Sigmoid colon (tissue), 7 donors: ENCODE measurements at regions of chr11 and their contacts with region 1.

Region 1: GRCh38 chr11:117226388-117227385 is 5.2 kb downstream of the PCSK7 start:
- DNase-seq: peak; percentile 81
- H3K4me3 ChIP-seq: no peak overlapping the region
- H3K27ac ChIP-seq: peak overlapping the region; percentile 33 to 95 (median 91)
- H3K4me1 ChIP-seq: peaks cover 0 to 72% (median 63%) of the 10 kb centered on the region in 4 donors
- H3K27me3 ChIP-seq: no peaks in the 10 kb centered on the region
- CTCF ChIP-seq: peak in 3 of 4 experiments; percentile 74 to 95 (median 82)
- EP300 ChIP-seq: no peak
- POLR2A ChIP-seq: no peak

Region 2: DNA sequence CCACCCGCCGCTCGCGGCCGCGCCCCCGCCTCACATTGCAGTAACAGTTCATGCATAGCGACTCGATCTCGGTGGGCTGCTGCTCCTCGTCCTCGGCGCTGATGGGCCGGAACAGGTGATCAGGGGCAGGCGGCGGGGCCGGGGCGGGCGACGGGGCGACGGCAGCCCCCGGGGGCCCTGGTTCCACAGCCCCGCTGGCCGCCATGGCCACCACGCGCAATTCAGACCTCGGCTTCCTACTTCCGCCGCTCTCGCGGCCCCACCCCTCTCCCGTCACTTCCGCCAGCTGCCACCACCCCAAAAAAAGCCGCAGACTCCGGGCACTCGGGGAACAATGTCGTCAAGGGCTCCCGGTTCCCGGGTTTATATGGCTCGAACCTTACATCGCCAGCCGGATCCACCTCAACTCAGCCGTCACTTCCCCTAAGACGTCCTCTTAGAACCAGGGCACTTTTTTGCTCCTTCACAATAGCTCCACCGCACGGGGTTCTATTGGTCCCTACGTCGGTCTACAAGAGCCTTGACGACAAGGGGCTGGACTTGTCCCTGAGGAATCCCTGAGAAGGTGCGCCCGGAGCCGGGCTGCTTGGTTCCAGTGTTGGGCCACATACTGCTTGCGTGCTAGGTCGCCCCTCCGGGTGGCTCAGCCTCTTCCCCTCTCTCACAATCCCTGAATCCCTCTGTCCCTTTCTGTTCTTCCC is 438.8 kb before region 1 on chr11 and contains the start of gene ZPR1:
- intact Hi-C with region 1: loop called (anchors 5 kb)
- DNase-seq: peak; percentile 92
- H3K4me3 ChIP-seq: peak within 1 kb of the TSS; percentile 86 to 97 (median 93)
- H3K27ac ChIP-seq: peak within 1 kb of the TSS; percentile 84 to 90 (median 88)
- H3K4me1 ChIP-seq: peaks cover 0 to 29% (median 20%) of the 10 kb centered on the region in 4 donors
- H3K27me3 ChIP-seq: no peaks in the 10 kb centered on the region
- CTCF ChIP-seq: peak in 1 of 4 experiments; percentile 15
- EP300 ChIP-seq: no peak
- POLR2A ChIP-seq: peak; percentile 66 to 68
- total RNA-seq, gene ZPR1: 14.7 to 28.6 (median 21.0) TPM

Region 3: DNA sequence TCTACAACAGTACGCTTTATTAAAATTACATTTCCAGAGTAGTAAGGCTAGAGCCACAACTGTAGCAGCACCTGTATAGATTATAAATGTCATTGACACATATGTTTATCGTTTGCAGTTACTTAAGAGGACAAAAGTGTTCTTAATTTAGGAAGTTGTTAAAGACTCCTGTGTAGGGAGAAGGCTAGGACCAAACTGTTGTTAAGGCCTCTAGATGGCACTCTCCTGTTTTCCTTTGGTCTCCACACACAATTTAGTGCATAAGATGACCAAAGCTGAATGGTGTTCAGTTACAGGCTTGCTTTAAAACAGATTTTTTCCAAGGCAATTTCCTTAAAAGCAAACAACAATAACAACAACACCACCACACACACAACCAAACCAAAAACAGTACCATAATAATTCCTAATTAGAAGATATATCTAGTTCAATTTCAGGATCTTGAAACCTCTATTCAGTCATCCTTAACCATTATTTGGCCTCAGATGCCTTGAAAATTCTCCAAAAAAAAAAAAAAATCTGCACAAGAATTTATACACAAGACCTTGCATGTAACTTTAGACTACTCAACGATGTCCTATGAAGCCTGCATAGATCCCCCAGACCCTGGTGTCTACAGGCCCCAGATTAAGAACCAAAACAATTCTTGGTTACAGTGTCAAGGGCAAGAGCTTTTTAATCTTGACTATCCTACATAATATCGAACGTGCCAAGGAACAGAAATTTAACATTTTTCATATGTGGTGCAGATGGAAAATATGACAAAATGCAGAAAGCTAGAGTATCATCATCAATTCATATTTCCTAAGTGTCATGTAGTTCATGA is 346.7 kb before region 1 on chr11:
- intact Hi-C with region 1: loop called (anchors 5 kb)
- DNase-seq: no peak
- H3K4me3 ChIP-seq: no peak overlapping the region
- H3K27ac ChIP-seq: peak overlapping the region in 1 of 4 donors; percentile 8
- H3K4me1 ChIP-seq: peaks cover 0 to 9% (median 4%) of the 10 kb centered on the region in 4 donors
- H3K27me3 ChIP-seq: no peaks in the 10 kb centered on the region
- CTCF ChIP-seq: peak; percentile 52 to 67 (median 60)
- EP300 ChIP-seq: no peak
- POLR2A ChIP-seq: no peak

Region 4: DNA sequence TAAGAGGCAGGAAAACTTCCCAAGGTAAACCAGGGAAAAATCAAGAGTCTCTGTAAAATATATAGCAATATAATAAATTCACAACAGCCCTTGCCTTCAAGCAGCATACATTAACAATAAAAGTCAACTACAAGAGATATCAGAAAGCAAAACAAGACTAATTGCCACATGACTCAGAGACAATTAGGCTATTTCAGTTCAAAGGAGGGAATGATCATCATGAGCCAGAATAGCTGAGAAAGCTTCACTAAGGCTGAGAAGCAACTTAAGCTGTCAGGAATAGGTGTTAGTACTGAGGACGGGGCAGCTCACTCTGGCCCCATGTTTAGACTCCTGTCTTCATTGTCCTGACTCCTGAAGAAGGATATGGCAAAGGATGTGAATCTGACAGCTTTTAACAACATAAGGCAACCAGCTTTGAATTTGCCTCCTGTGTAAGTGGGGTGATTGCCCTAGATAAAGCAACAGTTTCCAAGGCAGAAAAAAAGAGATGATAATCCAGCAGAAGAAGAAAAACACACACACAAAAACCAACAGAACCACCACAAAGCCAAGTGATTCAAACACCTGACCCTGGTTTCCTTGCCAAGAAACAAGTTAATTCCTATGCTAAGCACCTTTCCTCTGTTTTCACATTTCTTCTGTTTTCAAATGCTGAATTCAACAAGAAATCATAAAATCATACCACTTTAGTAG is 189.3 kb before region 1 on chr11:
- intact Hi-C with region 1: no loop called
- DNase-seq: no peak
- H3K4me3 ChIP-seq: no peak overlapping the region
- H3K27ac ChIP-seq: peak overlapping the region in 1 of 4 donors; percentile 4
- H3K4me1 ChIP-seq: peaks cover 0 to 39% (median 34%) of the 10 kb centered on the region in 4 donors
- H3K27me3 ChIP-seq: no peaks in the 10 kb centered on the region
- CTCF ChIP-seq: no peak
- EP300 ChIP-seq: no peak
- POLR2A ChIP-seq: no peak

Region 5: DNA sequence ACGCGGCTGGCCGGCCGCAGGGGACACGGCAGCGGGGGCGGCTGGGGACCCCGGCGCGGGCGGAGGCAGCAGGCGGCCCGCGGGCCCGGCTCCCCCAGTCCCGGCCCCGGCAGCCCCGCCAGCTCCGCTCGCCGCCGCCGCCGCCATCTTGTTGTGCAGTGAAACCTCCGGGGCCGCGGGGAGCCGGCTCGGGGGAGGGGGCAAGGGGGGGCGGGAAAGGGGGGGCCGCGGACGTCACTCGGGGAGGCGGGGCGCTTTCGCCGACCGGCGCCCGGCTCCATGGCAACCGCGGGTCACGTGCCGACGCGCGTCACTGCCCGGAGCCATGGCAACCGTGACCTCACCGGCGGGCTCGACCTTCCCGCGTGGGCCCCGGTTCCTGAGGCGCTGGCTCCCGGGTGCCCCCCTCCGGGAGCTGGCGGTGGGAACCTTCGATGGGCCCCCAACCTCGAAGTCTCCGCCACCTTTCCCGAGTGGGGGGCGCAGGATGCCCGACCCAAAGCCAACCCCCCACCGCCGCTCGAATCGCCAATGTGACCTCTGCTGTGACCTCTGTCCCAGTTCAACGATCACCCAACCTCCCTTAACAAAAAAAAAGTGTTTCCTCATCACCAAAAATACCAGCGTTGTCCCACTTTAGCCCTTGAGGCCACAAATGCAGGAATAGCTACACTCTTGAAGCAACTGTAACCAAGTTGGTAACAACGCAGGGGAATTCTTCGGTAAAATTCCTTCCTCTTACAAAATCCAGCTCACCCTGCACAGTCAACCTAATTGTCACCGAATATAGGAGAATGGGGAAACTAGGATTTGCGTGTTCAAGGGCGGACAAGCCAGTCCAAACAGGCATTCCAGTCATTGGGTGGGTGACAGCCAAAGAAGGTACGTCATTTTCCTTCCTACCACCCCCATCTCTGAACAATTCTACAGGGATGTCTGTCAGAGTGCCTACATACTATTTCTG is 128.1 kb before region 1 on chr11 and contains the start of gene SIK3:
- intact Hi-C with region 1: loop called (anchors 2 kb)
- DNase-seq: peak; percentile 97
- H3K4me3 ChIP-seq: peak within 1 kb of the TSS; percentile 77 to 98 (median 91)
- H3K27ac ChIP-seq: peak within 1 kb of the TSS; percentile 97 to 100 (median 98)
- H3K4me1 ChIP-seq: peaks cover 0 to 49% (median 44%) of the 10 kb centered on the region in 4 donors
- H3K27me3 ChIP-seq: no peaks in the 10 kb centered on the region
- CTCF ChIP-seq: peak in 2 of 4 experiments; percentile 20 to 32
- EP300 ChIP-seq: peak in 2 of 4 donors; percentile 76 to 82
- POLR2A ChIP-seq: peak; percentile 51 to 76
- total RNA-seq, gene SIK3: 35.3 to 53.2 (median 40.9) TPM

Region 6: GRCh38 chr11:117178210-117179034 is 48.3 kb before region 1 on chr11 and contains the start of gene SIDT2:
- intact Hi-C with region 1: loop called (anchors 2 kb)
- DNase-seq: peak; percentile 98
- H3K4me3 ChIP-seq: peak within 1 kb of the TSS; percentile 77 to 99 (median 88)
- H3K27ac ChIP-seq: peak within 1 kb of the TSS; percentile 92 to 99 (median 96)
- H3K4me1 ChIP-seq: peaks cover 0 to 49% (median 35%) of the 10 kb centered on the region in 4 donors
- H3K27me3 ChIP-seq: no peaks in the 10 kb centered on the region
- CTCF ChIP-seq: no peak
- EP300 ChIP-seq: peak in 2 of 4 donors; percentile 67 to 80
- POLR2A ChIP-seq: peak; percentile 89 to 95
- total RNA-seq, gene SIDT2: 20.7 to 50.7 (median 28.5) TPM

Region 7: DNA sequence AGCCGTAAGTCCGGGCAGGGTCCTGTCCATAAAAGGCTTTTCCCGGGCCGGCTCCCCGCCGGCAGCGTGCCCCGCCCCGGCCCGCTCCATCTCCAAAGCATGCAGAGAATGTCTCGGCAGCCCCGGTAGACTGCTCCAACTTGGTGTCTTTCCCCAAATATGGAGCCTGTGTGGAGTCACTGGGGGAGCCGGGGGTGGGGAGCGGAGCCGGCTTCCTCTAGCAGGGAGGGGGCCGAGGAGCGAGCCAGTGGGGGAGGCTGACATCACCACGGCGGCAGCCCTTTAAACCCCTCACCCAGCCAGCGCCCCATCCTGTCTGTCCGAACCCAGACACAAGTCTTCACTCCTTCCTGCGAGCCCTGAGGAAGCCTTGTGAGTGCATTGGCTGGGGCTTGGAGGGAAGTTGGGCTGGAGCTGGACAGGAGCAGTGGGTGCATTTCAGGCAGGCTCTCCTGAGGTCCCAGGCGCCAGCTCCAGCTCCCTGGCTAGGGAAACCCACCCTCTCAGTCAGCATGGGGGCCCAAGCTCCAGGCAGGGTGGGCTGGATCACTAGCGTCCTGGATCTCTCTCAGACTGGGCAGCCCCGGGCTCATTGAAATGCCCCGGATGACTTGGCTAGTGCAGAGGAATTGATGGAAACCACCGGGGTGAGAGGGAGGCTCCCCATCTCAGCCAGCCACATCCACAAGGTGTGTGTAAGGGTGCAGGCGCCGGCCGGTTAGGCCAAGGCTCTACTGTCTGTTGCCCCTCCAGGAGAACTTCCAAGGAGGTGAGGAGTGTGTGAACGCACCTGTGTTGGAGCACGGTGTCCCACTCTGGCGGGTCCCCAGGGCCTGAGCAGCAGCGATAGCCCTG is 27.4 kb before region 1 on chr11 and contains the start of gene TAGLN:
- intact Hi-C with region 1: loop called (anchors 1 kb)
- DNase-seq: peak; percentile 97
- H3K4me3 ChIP-seq: peak within 1 kb of the TSS; percentile 59 to 90 (median 86)
- H3K27ac ChIP-seq: peak within 1 kb of the TSS; percentile 90 to 99 (median 96)
- H3K4me1 ChIP-seq: peaks cover 0 to 40% (median 36%) of the 10 kb centered on the region in 4 donors
- H3K27me3 ChIP-seq: no peaks in the 10 kb centered on the region
- CTCF ChIP-seq: no peak
- EP300 ChIP-seq: peak in 2 of 4 donors; percentile 42 to 62
- POLR2A ChIP-seq: peak; percentile 86 to 97
- total RNA-seq, gene TAGLN: 6,854 to 14,048 (median 12,596) TPM